Activated CD4-positive, alpha-beta T cell treated with anti-CD3 and anti-CD28 coated beads, Interleukin-2, amount 10 ng/mL, durations not matched to agents 7 days and 5 days (primary cell): ENCODE measurements at regions of chr11 and their contacts with region 1.

Region 1: DNA sequence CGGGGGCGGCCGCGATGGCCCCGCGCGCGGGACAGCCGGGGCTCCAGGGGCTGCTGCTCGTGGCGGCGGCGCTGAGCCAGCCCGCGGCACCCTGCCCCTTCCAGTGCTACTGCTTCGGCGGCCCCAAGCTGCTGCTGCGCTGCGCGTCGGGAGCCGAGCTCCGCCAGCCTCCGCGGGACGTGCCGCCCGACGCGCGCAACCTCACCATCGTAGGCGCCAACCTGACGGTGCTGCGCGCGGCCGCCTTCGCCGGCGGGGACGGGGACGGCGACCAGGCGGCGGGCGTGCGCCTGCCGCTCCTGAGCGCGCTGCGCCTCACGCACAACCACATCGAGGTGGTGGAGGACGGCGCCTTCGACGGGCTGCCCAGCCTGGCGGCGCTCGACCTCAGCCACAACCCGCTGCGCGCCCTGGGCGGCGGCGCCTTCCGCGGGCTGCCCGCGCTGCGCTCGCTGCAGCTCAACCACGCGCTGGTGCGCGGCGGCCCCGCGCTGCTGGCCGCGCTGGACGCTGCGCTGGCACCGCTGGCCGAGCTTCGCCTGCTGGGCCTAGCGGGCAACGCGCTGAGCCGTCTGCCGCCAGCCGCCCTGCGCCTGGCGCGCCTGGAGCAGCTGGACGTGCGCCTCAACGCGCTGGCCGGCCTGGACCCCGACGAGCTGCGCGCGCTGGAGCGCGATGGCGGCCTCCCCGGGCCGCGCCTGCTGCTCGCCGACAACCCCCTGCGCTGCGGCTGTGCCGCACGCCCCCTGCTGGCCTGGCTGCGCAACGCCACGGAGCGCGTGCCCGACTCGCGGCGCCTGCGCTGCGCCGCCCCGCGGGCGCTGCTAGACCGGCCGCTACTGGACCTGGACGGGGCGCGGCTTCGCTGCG is 697 bp downstream of the TPBGL start:
- DNase-seq: peak; percentile 84
- H3K4me3 Mint-ChIP-seq: peak overlapping the region; percentile 68
- H3K27ac Mint-ChIP-seq: no peak overlapping the region
- H3K4me1 Mint-ChIP-seq: peaks cover 15% of the 10 kb centered on the region
- H3K27me3 Mint-ChIP-seq: peaks cover 51% of the 10 kb centered on the region

Region 2: DNA sequence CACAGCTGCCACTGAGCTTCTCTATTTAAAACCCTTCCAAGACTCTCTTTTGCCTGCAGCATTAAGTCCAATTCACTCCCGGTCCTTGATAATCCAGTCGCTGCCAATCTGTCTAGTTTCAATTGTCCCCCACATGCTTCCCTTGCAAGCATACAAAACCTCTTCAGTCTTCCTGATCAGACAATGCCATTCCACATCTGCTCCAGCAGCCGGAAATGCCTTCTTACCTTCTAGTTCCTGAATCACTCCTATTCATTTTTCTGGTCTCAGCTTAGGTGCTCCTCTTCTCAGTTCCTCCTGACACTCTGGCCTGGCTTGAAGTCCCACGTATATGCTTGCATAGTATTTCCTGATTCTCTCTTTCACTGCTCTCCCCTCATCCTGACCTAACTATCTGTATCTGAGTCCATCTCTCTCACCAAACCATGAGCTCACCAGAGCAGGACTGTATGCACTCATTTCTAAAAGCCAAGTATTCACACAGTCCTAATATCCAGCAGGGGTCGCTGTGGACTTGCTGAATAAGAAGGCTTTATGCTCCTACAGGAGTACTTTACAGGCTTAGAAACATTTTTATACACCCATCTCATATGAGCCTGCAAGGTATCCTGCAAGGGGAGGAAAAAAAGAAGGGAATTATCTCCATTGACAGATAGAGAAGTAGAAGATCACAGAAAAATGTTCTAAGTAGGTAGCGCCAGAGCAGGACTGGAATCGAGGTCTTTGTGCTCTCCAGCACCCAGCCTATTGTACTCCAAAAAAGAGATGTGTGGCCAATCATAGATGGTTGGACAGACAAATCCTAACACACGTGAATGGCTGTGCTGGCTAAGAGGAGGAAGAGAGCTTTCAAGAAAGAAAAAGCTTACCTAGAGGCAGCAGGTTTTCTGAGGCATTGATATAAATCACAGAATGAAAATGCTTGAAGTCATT is 311.6 kb before region 1 on chr11:
- CTCF ChIA-PET with region 1: interaction called, 17 read pairs
- POLR2A ChIA-PET with region 1: no interaction called
- DNase-seq: peak; percentile 83
- H3K4me3 Mint-ChIP-seq: no peak overlapping the region
- H3K27ac Mint-ChIP-seq: no peak overlapping the region
- H3K4me1 Mint-ChIP-seq: peaks cover 38% of the 10 kb centered on the region
- H3K27me3 Mint-ChIP-seq: no peaks in the 10 kb centered on the region

Region 3: DNA sequence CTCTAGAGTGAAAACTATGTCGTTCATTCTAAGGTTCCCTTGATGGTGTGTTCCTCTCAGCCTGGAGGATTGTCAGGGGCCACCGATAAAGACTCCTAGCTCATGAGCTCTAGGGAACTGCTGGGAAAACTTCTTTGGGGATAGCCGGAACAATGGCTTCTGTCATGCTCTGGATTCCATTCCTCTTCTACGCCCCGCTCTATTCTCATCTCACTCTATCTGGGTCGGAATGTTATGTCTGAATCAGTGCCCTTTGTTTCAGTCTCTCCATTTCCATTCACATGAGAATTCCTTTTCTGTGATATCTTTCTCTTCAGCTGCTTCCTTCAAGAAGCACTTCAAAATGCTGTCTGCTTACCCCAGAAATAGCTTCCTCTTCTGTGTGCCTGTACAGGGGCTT is 107.3 kb before region 1 on chr11:
- CTCF ChIA-PET with region 1: interaction called, 145 read pairs
- POLR2A ChIA-PET with region 1: interaction called, 6 read pairs
- DNase-seq: no peak
- H3K4me3 Mint-ChIP-seq: no peak overlapping the region
- H3K27ac Mint-ChIP-seq: no peak overlapping the region
- H3K4me1 Mint-ChIP-seq: no peaks in the 10 kb centered on the region
- H3K27me3 Mint-ChIP-seq: peaks cover 22% of the 10 kb centered on the region

Region 4: DNA sequence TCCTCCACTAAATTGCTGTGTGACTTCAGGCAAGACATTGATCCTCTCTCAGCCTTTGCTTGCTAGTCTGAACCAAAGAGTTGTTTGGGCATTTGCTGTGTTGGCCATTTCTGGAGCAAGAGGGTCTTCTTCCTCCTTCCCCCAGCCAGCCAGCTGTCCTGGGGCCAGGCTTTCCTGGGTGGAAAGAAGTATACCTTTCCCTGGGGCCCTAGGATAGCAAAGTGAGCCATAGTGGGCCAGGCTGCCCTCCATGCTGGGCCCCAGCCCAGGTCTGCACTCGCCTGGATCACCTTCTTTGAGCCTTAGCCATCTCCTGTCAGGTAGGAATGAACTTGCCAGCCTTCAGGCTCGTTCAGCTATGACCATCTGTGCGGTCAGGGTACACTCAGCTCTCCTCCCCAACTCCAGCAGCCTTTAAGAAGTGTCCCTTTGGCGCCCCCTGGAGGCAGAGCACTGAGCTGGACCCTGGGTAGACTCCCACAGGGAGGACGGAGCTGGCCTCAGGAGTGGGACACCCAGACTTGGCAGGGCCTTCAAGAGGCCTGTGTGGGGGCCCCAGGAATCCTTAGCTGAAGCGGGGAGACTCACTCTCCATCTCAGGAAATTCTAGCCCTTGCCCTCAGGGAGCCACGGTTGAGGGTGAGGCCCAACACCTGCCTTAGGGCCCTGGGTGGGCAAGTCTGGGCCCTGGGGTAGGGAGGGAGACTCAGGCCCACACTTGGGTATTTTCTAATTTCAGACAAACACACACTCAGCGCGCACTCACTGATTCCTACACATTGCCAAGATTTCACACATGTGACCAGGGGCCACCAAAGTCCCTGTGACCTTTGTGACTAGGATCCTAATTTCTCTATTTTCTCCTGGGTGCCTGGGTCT is 36.3 kb before region 1 on chr11:
- CTCF ChIA-PET with region 1: interaction called, 13 read pairs
- POLR2A ChIA-PET with region 1: no interaction called
- DNase-seq: peak; percentile 89
- H3K4me3 Mint-ChIP-seq: no peak overlapping the region
- H3K27ac Mint-ChIP-seq: no peak overlapping the region
- H3K4me1 Mint-ChIP-seq: no peaks in the 10 kb centered on the region
- H3K27me3 Mint-ChIP-seq: peaks cover 6% of the 10 kb centered on the region

Region 5: GRCh38 chr11:75262961-75263852 is 21.9 kb after region 1 on chr11:
- CTCF ChIA-PET with region 1: interaction called, 11 read pairs
- POLR2A ChIA-PET with region 1: no interaction called
- DNase-seq: no peak
- H3K4me3 Mint-ChIP-seq: no peak overlapping the region
- H3K27ac Mint-ChIP-seq: no peak overlapping the region
- H3K4me1 Mint-ChIP-seq: peaks cover 36% of the 10 kb centered on the region
- H3K27me3 Mint-ChIP-seq: no peaks in the 10 kb centered on the region